Gastrocnemius medialis (tissue), 4 donors: ENCODE measurements at regions of chr12 and their contacts with region 1.

Region 1: GRCh38 chr12:68406134-68406594 is 74.0 kb upstream of the MDM1 start:
- DNase-seq: peak; percentile 84 to 93
- ATAC-seq: peak; percentile 95 to 98
- H3K4me3 ChIP-seq: peak overlapping the region in 3 of 4 donors; percentile 19 to 35 (median 19)
- H3K27ac ChIP-seq: peak overlapping the region; percentile 59 to 78 (median 76)
- H3K4me1 ChIP-seq: peaks cover 30 to 38% of the 10 kb centered on the region in 2 donors
- H3K27me3 ChIP-seq: no peaks in the 10 kb centered on the region
- CTCF ChIP-seq: peak; percentile 12 to 44 (median 33)
- POLR2A ChIP-seq: no peak

Region 2: DNA sequence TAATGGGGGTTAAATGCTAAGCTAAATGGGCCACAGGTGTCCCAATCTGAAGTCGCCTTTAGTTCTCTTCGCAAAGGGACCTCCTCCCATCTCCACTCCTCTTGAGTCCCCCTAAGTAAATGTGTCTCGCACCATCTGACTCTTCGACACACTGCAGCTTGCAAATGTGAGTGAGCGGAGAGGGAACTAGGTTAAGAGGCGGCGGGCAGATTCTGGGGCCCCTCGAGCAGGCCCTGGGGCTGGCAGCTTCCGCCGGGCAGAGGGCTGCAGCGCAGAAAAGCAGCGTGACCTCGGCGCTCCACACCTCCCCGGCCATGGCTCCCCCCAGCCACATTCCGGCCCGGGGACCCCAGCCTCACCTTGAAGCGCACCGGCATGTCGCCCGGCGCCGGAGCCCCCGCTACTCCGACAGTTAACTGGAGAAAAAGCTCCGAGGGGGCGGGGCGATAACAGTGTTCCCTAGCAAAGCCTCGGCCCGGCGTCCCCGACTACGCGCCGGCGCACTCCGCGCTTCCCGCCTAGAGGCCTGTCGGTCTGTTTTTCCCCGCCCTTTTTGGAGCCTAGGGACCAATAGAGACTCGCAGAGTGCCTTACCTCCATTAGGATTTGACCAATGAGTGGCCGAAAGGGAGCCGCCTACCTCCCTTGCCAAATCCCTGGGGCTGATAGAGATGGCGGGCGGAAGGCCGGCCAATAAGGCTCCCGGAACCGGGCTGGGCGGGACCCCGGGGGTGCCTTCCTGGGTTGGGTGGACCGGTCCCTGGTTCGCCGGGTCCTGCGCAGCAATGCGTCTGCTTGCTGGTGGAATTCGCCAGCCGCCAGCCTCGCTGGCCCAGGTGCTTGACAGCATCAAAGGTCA is 74.1 kb before region 1 on chr12 and contains the start of gene MDM1:
- in situ Hi-C with region 1: no loop called
- intact Hi-C with region 1: no loop called
- DNase-seq: peak; percentile 96 to 97
- ATAC-seq: peak; percentile 100
- H3K4me3 ChIP-seq: peak within 1 kb of the TSS; percentile 71 to 87 (median 84)
- H3K27ac ChIP-seq: peak within 1 kb of the TSS; percentile 41 to 71 (median 69)
- H3K4me1 ChIP-seq: peaks cover 0 to 8% of the 10 kb centered on the region in 2 donors
- H3K27me3 ChIP-seq: no peaks in the 10 kb centered on the region
- CTCF ChIP-seq: peak in 1 of 5 experiments; percentile 6
- POLR2A ChIP-seq: peak in 1 of 2 donors; percentile 33
- total RNA-seq, gene MDM1: 1.6 to 6.8 (median 3.4) TPM

Region 3: GRCh38 chr12:68349921-68350606 is 56.1 kb before region 1 on chr12:
- in situ Hi-C with region 1: no loop called
- intact Hi-C with region 1: no loop called
- DNase-seq: no peak
- ATAC-seq: peak; percentile 87 to 89
- H3K4me3 ChIP-seq: no peak overlapping the region
- H3K27ac ChIP-seq: peak overlapping the region in 1 of 4 donors; percentile 40
- H3K4me1 ChIP-seq: peaks cover 0 to 3% of the 10 kb centered on the region in 2 donors
- H3K27me3 ChIP-seq: no peaks in the 10 kb centered on the region
- CTCF ChIP-seq: no peak
- POLR2A ChIP-seq: no peak

Region 4: GRCh38 chr12:68428724-68429501 is 22.7 kb after region 1 on chr12:
- in situ Hi-C with region 1: no loop called
- intact Hi-C with region 1: no loop called
- DNase-seq: no peak
- ATAC-seq: no peak
- H3K4me3 ChIP-seq: no peak overlapping the region
- H3K27ac ChIP-seq: no peak overlapping the region
- H3K4me1 ChIP-seq: peaks cover 9 to 10% of the 10 kb centered on the region in 2 donors
- H3K27me3 ChIP-seq: no peaks in the 10 kb centered on the region
- CTCF ChIP-seq: no peak
- POLR2A ChIP-seq: no peak

Region 5: DNA sequence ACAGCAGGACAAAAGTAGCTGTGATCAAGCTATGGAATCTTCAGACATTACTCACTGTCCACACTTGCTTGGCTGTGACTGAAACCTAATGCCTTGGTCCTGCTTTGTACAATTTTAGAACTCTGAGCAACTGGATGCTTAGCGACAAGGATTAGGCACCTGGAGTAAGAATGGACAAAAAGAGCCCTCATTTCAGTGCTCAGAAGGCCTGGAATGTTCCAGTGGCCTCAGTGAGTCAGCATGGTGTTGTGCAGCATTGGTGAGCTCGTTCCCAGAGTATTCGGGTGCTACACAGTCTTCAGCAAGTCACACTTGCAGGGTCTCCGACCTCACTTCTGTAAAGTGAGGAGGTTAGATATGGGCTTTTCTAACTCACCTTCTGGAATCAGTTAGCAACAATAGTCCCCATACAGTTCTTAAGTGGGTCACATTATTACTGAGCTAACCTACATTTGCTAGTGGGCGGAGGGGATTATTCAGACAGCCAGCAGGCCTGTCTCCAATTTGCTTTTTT is 34.0 kb after region 1 on chr12:
- in situ Hi-C with region 1: no loop called
- intact Hi-C with region 1: loop called (anchors 2 kb)
- DNase-seq: peak; percentile 26 to 54
- ATAC-seq: peak; percentile 99
- H3K4me3 ChIP-seq: no peak overlapping the region
- H3K27ac ChIP-seq: peak overlapping the region; percentile 68 to 85 (median 79)
- H3K4me1 ChIP-seq: peaks cover 9 to 19% of the 10 kb centered on the region in 2 donors
- H3K27me3 ChIP-seq: no peaks in the 10 kb centered on the region
- CTCF ChIP-seq: no peak
- POLR2A ChIP-seq: no peak